Left cardiac atrium (tissue), 4 donors: ENCODE measurements at regions of chr19 and their contacts with region 1.

Region 1: GRCh38 chr19:48558018-48558684 is 6.2 kb downstream of the SULT2B1 start:
- DNase-seq: no peak
- ATAC-seq: peak in 1 of 2 donors; percentile 55

Region 2: DNA sequence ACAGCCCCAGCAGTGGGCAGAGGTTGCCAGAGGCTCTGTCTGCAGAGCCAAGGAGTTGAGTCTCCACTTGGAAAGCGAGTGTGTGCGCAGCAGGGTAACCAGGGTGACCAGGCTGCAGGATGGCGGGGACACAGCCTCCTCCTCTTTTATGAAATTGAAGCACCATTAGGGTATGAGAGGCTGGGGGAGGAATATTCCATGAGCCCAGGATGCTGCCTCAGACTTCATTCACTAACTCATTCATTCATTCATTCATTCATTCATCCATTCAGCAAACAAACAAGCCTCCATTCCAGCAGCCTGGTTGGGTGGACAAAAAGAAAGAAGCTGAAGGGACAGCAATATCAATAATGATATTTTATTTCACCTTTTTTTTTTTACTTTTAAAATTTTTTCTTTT is 39.9 kb before region 1 on chr19:
- intact Hi-C with region 1: loop called in 1 of 2 experiments (anchors 5 kb)
- DNase-seq: no peak
- ATAC-seq: no peak